ENCODE measurements at regions of chr14 and their contacts with region 1.

Region 1: GRCh38 chr14:59126710-59127432 is 61.6 kb upstream of the DAAM1 start:
- DNase-seq: peak in 2 of 5 donors; percentile 21 to 25
- H3K4me3 ChIP-seq: no peak overlapping the region
- H3K27ac ChIP-seq: no peak overlapping the region
- H3K4me1 ChIP-seq: no peaks in the 10 kb centered on the region
- H3K27me3 ChIP-seq: no peaks in the 10 kb centered on the region
- CTCF ChIP-seq: peak; percentile 42 to 81 (median 80)
- EP300 ChIP-seq: no peak
- POLR2A ChIP-seq: no peak

Region 2: GRCh38 chr14:59189786-59190771 is 63.2 kb after region 1 on chr14:
- intact Hi-C with region 1: loop called in 2 of 4 experiments (anchors 2 to 5 kb)
- DNase-seq: peak; percentile 72 to 85 (median 81)
- H3K4me3 ChIP-seq: peak overlapping the region; percentile 69
- H3K27ac ChIP-seq: peak overlapping the region; percentile 60 to 95
- H3K4me1 ChIP-seq: peaks cover 11% of the 10 kb centered on the region
- H3K27me3 ChIP-seq: no peaks in the 10 kb centered on the region
- CTCF ChIP-seq: no peak
- EP300 ChIP-seq: no peak
- POLR2A ChIP-seq: peak; percentile 11

Region 3: GRCh38 chr14:59265808-59266207 is 138.9 kb after region 1 on chr14:
- intact Hi-C with region 1: no loop called
- DNase-seq: no peak
- H3K4me3 ChIP-seq: no peak overlapping the region
- H3K27ac ChIP-seq: no peak overlapping the region
- H3K4me1 ChIP-seq: peaks cover 1% of the 10 kb centered on the region
- H3K27me3 ChIP-seq: no peaks in the 10 kb centered on the region
- CTCF ChIP-seq: no peak
- EP300 ChIP-seq: no peak
- POLR2A ChIP-seq: no peak

Region 4: DNA sequence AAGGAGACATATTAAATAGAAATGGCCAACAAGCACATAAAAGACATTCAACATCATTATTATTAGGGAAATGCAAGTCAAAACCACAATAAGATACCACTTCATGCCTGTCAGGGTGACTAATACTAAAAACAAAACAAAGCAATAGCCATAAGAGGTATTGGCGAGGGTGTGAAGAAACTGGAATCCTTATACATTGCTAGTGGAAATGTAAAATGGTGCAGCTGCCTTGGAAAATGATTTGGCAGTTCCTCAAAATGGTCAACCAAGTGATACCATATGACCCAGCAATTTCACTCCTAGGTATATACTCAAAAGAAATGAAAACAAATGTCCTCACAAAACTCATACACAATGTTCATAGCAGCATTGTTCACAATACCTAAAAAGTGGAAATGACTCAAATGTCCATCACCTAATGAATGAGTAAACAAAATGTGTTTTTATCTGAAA is 311.4 kb after region 1 on chr14:
- intact Hi-C with region 1: loop called in 2 of 4 experiments (anchors 5 kb)
- DNase-seq: no peak
- H3K4me3 ChIP-seq: no peak overlapping the region
- H3K27ac ChIP-seq: no peak overlapping the region
- H3K4me1 ChIP-seq: no peaks in the 10 kb centered on the region
- H3K27me3 ChIP-seq: no peaks in the 10 kb centered on the region
- CTCF ChIP-seq: no peak
- EP300 ChIP-seq: no peak
- POLR2A ChIP-seq: no peak

Region 5: GRCh38 chr14:59454131-59454530 is 327.3 kb after region 1 on chr14:
- intact Hi-C with region 1: loop called in 1 of 4 experiments (anchors 5 kb)
- DNase-seq: no peak
- H3K4me3 ChIP-seq: no peak overlapping the region
- H3K27ac ChIP-seq: no peak overlapping the region
- H3K4me1 ChIP-seq: no peaks in the 10 kb centered on the region
- H3K27me3 ChIP-seq: no peaks in the 10 kb centered on the region
- CTCF ChIP-seq: no peak
- EP300 ChIP-seq: no peak
- POLR2A ChIP-seq: no peak

Measured in ovary (tissue), 10 donors.